Right ventricle myocardium superior (tissue), 1 donor: ENCODE measurements at regions of chr15 and their contacts with region 1.

Region 1: GRCh38 chr15:89171136-89172072 is 50.0 kb downstream of the RLBP1 start:
- DNase-seq: no peak
- ATAC-seq: peak; percentile 40

Region 2: DNA sequence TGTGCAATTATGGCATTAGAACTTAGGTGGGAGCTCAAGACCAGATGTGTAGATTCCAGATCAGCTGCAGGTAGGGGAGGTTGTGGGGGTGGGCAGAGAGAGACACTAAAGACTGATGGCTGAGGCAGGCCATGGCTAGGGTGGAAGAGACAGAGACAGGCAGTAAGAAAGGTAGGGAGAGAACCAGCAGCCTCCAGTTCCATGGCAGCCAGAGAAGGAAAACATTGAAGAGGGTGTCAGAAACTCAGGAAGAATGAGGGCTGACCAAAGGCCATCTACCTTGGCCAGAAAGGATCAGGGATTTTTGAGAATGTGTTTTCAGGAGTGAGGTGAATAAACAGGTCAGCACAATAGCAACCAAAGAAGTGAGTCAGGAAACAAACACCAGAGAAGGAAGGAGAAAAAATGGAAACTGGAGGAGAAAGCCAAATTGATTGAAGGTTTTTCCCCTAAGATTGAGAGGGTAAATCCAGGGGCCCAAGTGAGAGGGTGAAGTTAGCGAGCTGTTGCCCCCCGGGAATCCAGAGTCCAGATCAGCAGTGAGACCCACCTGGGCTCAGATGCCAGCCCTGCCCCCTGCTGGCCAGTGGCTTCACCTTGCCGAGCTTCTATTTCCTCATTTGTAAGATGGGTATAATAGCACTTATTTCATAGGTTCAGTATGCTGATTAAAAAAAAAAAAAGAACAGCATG is 42.1 kb before region 1 on chr15:
- intact Hi-C with region 1: loop called (anchors 5 kb)
- DNase-seq: peak; percentile 54
- ATAC-seq: no peak

Region 3: DNA sequence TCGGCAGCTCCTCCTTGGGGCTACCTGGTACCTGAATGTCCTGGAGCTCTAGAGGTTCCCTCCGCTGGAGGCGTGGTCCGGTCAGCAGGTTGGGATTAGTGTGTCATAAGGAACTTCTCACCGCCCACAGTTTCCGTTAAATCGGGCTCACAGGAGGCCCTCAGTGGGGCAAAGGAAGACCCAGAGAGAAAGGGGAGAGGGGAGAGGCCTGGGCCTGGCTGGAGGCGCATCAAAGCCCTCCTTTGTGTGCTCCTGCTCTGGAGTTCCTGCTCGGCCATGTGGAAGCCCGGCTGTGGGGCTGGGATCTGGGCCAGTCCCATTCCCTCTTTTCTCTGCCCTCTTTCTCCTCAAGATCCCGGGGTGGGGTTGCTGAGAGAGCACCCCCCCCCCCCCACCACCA is 50.1 kb after region 1 on chr15 and contains the start of gene RLBP1:
- intact Hi-C with region 1: no loop called
- DNase-seq: no peak
- ATAC-seq: no peak
- total RNA-seq, gene RLBP1: not detected

Region 4: DNA sequence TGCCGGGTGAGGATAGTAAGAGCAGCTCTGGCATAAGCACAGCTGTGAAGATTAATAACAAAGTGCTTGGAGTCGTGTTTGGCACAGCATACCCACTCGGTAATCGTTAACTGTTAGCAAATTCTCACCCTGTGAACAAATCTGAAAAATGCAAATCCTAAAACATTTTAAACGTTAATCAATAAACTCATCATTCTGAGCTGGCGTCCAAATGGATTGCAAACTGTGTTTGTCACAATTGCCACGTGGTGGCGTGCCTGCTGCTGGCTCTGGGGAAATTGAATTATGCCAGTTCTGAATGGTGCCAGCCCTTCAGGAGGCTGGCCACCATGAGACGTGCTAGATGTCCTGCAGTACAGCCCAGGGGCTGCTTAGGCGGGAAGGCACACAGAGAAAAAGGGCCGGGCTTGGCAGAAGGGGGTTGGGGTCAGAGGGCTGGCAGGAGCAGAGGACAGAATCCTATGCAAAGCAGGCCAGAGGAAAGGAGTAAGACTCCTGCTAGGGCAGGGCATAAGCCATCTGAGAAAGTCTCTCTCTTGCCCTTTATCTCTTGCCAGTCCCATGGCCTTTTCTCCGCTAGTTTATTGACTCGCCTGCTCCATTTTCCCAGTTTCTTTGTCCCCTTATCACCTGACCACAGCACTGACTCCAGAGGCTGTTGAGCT is 185.4 kb after region 1 on chr15:
- intact Hi-C with region 1: no loop called
- DNase-seq: no peak
- ATAC-seq: no peak